Activated naive CD4-positive, alpha-beta T cell treated with anti-CD3 and anti-CD28 coated beads, Interleukin-2, amount 10 ng/mL, durations not matched to agents 7 days and 5 days (primary cell): ENCODE measurements at regions of chr3 and their contacts with region 1.

Region 1: DNA sequence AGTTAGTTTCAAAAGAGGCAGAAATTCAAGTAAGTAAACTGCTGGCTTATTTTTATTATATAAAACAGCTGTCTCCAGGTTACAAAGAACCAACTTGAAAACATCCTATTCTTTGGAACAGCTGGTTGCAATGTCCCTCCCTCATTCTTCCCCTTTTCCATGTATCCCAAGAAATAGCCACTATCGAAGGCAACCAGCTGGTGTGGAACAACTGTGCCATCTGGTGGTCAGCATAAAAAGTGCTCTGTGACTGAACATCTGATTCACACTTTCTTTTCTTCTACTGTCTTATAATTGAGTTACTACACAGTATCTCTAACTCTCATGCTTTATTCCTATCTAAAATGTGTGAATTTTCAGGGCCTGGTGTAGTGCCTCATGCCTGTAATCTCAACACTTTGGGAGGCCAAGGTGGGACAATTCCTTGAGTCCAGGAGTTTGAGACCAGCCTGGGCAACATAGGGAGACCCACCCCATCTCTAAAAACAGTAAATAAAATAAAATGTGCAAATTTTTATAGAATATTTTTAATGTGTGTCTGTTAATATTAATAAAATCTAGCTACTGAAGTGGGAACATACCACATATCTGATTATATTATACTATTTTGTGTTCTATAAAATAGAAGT is 9.6 kb downstream of the OSBPL11 start:
- DNase-seq: peak; percentile 60
- H3K4me3 Mint-ChIP-seq: no peak overlapping the region
- H3K27ac Mint-ChIP-seq: no peak overlapping the region
- H3K4me1 Mint-ChIP-seq: peaks cover 12% of the 10 kb centered on the region
- H3K27me3 Mint-ChIP-seq: no peaks in the 10 kb centered on the region

Region 2: GRCh38 chr3:124928333-124929202 is 657.1 kb before region 1 on chr3:
- CTCF ChIA-PET with region 1: interaction called, 21 read pairs
- DNase-seq: peak; percentile 78
- H3K4me3 Mint-ChIP-seq: no peak overlapping the region
- H3K27ac Mint-ChIP-seq: no peak overlapping the region
- H3K4me1 Mint-ChIP-seq: peaks cover 6% of the 10 kb centered on the region
- H3K27me3 Mint-ChIP-seq: peaks cover 38% of the 10 kb centered on the region

Region 3: DNA sequence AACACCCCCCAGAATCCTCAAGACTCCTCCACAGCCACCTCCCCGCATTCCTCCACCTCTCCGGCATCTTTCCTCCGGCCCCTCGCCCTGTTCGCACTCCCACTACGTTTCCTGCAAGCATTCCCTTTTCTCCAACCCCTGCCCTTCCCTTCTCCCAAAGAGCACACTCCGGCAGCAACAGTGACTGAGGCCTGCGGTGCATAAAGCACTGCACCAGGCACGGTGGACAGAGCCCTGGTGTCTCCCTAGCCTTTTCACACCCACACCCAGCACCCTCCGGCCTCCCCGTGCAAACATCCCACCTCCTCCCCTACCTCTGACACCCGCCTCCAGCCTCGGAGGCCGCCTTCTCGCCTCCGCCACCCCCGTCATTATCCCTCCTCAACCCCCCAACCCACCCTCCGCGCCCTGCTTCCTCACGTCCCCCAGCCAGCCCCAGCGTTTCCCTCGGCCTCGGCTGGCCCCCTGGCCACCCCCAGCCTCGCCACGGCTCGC is 211.2 kb before region 1 on chr3:
- CTCF ChIA-PET with region 1: no interaction called
- DNase-seq: peak; percentile 61
- H3K4me3 Mint-ChIP-seq: peak overlapping the region; percentile 96
- H3K27ac Mint-ChIP-seq: peak overlapping the region; percentile 81
- H3K4me1 Mint-ChIP-seq: peaks cover 39% of the 10 kb centered on the region
- H3K27me3 Mint-ChIP-seq: peaks cover 4% of the 10 kb centered on the region